ENCODE measurements at regions of chr4 and their contacts with region 1.

Region 1: DNA sequence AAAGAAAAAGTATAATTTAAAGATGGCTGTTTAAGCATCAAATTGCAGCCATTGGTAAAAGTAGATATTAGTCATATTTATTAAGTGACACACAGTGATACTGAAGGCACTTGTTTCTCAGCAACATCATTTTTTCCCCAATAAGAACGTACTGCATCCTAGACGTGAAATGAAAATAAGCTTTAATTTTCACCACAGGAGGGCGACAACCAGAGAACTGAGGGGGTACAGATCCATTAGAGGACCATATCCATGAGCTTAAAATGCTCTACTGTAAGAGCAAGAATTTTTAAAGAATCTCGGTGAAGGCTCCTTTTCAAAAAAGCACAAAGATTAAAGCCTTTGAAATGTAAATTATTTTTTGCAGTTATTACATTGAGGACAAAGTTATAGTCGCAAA is 33.4 kb downstream of the FRG1 start:
- DNase-seq: peak; percentile 31
- ATAC-seq: no peak
- H3K4me3 ChIP-seq: no peak overlapping the region
- H3K27ac ChIP-seq: no peak overlapping the region
- H3K4me1 ChIP-seq: no peaks in the 10 kb centered on the region
- H3K27me3 ChIP-seq: no peaks in the 10 kb centered on the region
- CTCF ChIP-seq: peak; percentile 54

Region 2: DNA sequence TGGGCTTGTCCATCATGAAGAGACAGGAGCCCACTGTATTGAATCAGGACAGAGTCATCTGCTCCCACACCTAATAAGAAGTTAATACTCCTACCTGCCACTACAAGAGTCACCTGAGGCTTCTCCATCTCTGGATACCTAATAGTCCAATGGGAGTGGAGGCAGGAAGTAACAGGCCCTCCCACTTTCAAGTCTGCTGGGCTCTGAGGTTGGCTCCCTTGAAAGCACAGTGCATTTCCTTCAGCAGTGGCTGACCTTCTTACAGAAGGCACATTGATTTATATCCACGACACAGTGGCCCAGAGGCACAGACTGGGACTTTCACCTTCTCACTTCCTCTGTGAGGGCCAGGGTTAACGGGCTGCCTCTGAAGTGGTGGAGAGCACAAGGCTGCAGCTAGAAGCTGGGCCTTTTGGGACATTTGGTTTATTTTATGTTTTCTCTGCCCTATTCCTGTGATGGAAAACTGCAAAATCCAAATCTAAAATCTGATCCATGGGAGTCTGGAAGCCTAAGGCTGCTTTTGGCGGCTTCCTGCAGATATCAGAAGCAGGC is 14.9 kb after region 1 on chr4:
- CTCF ChIA-PET with region 1: no interaction called
- POLR2A ChIA-PET with region 1: no interaction called
- intact Hi-C with region 1: no loop called
- DNase-seq: no peak
- ATAC-seq: no peak
- H3K4me3 ChIP-seq: no peak overlapping the region
- H3K27ac ChIP-seq: no peak overlapping the region
- H3K4me1 ChIP-seq: no peaks in the 10 kb centered on the region
- H3K27me3 ChIP-seq: no peaks in the 10 kb centered on the region
- CTCF ChIP-seq: no peak

Region 3: DNA sequence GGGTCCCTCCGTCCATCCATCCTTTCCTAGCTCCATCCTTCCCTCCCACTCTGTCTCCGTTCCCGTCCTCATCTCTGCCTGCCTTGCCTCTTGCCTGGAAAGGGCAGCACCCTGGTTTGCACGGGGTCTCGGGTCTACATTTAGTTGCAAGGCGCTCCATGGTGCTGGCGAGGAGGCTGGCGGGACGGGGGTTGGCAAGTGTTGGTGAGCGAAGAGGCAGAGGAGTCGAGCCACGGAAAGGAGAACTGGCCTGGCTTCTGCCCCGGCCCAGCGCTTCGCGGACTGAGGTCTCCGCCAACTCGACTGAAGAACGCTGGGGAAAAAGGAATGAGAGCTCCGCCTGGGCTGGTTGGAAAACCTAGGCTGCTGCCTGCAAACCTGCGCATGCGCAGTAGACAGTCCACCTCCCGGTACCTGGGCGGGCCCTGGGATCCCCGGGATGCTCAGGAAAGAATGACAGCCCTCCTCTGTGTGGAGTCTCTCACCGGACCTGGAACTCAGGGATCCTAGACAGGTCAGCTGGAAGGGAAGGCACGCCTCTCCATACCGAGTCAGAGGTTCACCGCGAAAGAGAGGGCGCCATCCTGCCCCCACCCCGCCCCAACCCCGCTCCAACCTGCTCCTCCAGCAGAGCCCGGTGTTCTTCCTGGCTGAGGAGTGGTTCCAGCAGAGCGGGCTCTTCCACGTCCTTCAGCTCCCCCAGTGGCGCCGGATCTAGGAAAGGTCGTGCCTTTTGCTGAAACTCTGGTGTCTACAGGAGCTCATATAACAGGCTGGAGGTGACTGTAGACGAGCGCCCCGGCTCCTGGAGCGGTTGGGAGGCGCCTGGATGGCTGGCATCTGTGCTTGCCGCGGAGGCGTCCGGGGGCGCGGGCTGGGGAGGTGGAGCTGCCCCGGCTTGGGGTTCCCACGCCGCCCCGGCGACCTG is 47.0 kb after region 1 on chr4:
- CTCF ChIA-PET with region 1: no interaction called
- POLR2A ChIA-PET with region 1: no interaction called
- intact Hi-C with region 1: loop called (anchors 5 kb)
- DNase-seq: peak; percentile 60
- ATAC-seq: peak; percentile 76
- H3K4me3 ChIP-seq: peak overlapping the region; percentile 54
- H3K27ac ChIP-seq: no peak overlapping the region
- H3K4me1 ChIP-seq: no peaks in the 10 kb centered on the region
- H3K27me3 ChIP-seq: no peaks in the 10 kb centered on the region
- CTCF ChIP-seq: no peak

Measured in PC-3 (cell line).